OCI-LY7 (cell line): ENCODE measurements at regions of chr12 and their contacts with region 1.

Region 1: GRCh38 chr12:12356886-12357718 is at the start of gene BORCS5:
- DNase-seq: peak; percentile 99
- H3K4me3 ChIP-seq: peak within 1 kb of the TSS; percentile 81
- H3K27ac ChIP-seq: peak within 1 kb of the TSS; percentile 82
- H3K4me1 ChIP-seq: peaks cover 18% of the 10 kb centered on the region
- CTCF ChIP-seq: peak; percentile 55
- total RNA-seq, gene BORCS5: 9.6 and 10.4 TPM in 2 replicates

Region 2: GRCh38 chr12:12562585-12563261 is 205.6 kb after region 1 on chr12 and contains the start of gene DUSP16:
- CTCF ChIA-PET with region 1: no interaction called
- POLR2A ChIA-PET with region 1: interaction called, 3 read pairs
- intact Hi-C with region 1: loop called (anchors 5 kb)
- DNase-seq: peak; percentile 79
- H3K4me3 ChIP-seq: peak within 1 kb of the TSS; percentile 72
- H3K27ac ChIP-seq: peak within 1 kb of the TSS; percentile 59
- H3K4me1 ChIP-seq: peaks cover 26% of the 10 kb centered on the region
- CTCF ChIP-seq: peak; percentile 17; the same call in 1 of the 2 replicates
- total RNA-seq, gene DUSP16: 2.8 and 3.7 TPM in 2 replicates

Region 3: GRCh38 chr12:12696562-12697383 is 339.7 kb after region 1 on chr12:
- CTCF ChIA-PET with region 1: no interaction called
- POLR2A ChIA-PET with region 1: interaction called, 7 read pairs
- intact Hi-C with region 1: loop called (anchors 1 kb)
- DNase-seq: peak; percentile 97
- H3K4me3 ChIP-seq: peak overlapping the region; percentile 73
- H3K27ac ChIP-seq: peak overlapping the region; percentile 97
- H3K4me1 ChIP-seq: peaks cover 48% of the 10 kb centered on the region
- CTCF ChIP-seq: peak; percentile 27; the same call in 1 of the 2 replicates